Caco-2 (cell line): ENCODE measurements at regions of chr11 and their contacts with region 1.

Region 1: GRCh38 chr11:12963792-12964536 is 45.2 kb upstream of the RASSF10 start:
- DNase-seq: peak; percentile 70 to 85
- H3K4me3 ChIP-seq: no peak overlapping the region
- H3K4me3 Mint-ChIP-seq: no peak overlapping the region
- H3K27ac Mint-ChIP-seq: no peak overlapping the region
- H3K4me1 ChIP-seq: no peaks in the 10 kb centered on the region
- H3K4me1 Mint-ChIP-seq: no peaks in the 10 kb centered on the region
- H3K27me3 ChIP-seq: no peaks in the 10 kb centered on the region
- H3K27me3 Mint-ChIP-seq: peaks cover 5% of the 10 kb centered on the region
- CTCF ChIP-seq: peak; percentile 81 to 93

Region 2: GRCh38 chr11:13008625-13009475 is 44.9 kb after region 1 on chr11 and contains the start of gene RASSF10:
- CTCF ChIA-PET with region 1: interaction called, 6 read pairs
- POLR2A ChIA-PET with region 1: interaction called, 4 read pairs
- intact Hi-C with region 1: loop called (anchors 2 kb)
- DNase-seq: peak; percentile 74 to 79
- H3K4me3 ChIP-seq: peak within 1 kb of the TSS; percentile 52
- H3K4me3 Mint-ChIP-seq: peak within 1 kb of the TSS; percentile 74
- H3K27ac Mint-ChIP-seq: no peak within 1 kb of the TSS
- H3K4me1 ChIP-seq: peaks cover 31% of the 10 kb centered on the region
- H3K4me1 Mint-ChIP-seq: peaks cover 21% of the 10 kb centered on the region
- H3K27me3 ChIP-seq: 0 out of 2 replicates have a peak, but pooled peaks cover 1% of the 10 kb centered on the region
- H3K27me3 Mint-ChIP-seq: peaks cover 13% of the 10 kb centered on the region
- CTCF ChIP-seq: no peak
- total RNA-seq, gene RASSF10: 0.91 and 1.3 TPM in 2 replicates

Region 3: DNA sequence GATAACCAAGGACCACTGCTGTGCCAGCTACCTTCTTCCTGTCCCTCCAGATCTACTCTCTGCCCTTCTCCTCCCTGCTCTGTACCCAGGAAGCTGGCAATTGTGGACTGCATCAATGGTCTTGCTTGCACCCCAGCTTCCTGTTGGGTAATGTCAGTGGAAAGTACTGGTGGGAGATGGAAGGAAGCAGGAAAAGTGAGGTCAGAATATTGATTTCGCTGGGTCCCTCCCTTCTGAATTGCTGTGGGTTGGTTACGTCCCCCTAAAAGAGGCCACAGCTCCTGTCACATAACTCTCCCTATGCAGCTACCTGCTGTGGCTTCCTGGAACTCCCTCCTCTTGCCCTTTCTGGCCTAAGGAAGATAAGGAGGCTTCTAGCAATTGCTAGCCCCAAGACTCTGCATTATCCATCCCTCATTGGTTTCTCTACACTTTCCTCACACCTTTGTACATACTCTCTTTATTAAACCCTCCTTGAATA is 126.3 kb after region 1 on chr11:
- CTCF ChIA-PET with region 1: no interaction called
- POLR2A ChIA-PET with region 1: no interaction called
- intact Hi-C with region 1: no loop called
- DNase-seq: no peak
- H3K4me3 ChIP-seq: no peak overlapping the region
- H3K4me3 Mint-ChIP-seq: no peak overlapping the region
- H3K27ac Mint-ChIP-seq: no peak overlapping the region
- H3K4me1 ChIP-seq: peaks cover 5% of the 10 kb centered on the region; the same call in 1 of the 2 replicates
- H3K4me1 Mint-ChIP-seq: no peaks in the 10 kb centered on the region
- H3K27me3 ChIP-seq: no peaks in the 10 kb centered on the region
- H3K27me3 Mint-ChIP-seq: peaks cover 15% of the 10 kb centered on the region
- CTCF ChIP-seq: no peak

Region 4: GRCh38 chr11:13114566-13115379 is 150.8 kb after region 1 on chr11:
- CTCF ChIA-PET with region 1: interaction called, 7 read pairs
- POLR2A ChIA-PET with region 1: no interaction called
- intact Hi-C with region 1: loop called (anchors 1 kb)
- DNase-seq: peak; percentile 81 to 82
- H3K4me3 ChIP-seq: no peak overlapping the region
- H3K4me3 Mint-ChIP-seq: no peak overlapping the region
- H3K27ac Mint-ChIP-seq: peak overlapping the region; percentile 11
- H3K4me1 ChIP-seq: peaks cover 5% of the 10 kb centered on the region; the same call in 1 of the 2 replicates
- H3K4me1 Mint-ChIP-seq: peaks cover 10% of the 10 kb centered on the region
- H3K27me3 ChIP-seq: no peaks in the 10 kb centered on the region; the same call in 1 of the 2 replicates
- H3K27me3 Mint-ChIP-seq: no peaks in the 10 kb centered on the region
- CTCF ChIP-seq: peak in 1 of 2 experiments; percentile 66

Region 5: GRCh38 chr11:13152736-13153533 is 189.0 kb after region 1 on chr11:
- CTCF ChIA-PET with region 1: interaction called, 5 read pairs
- POLR2A ChIA-PET with region 1: no interaction called
- intact Hi-C with region 1: loop called (anchors 1 kb)
- DNase-seq: peak in 1 of 2 experiments; percentile 39
- H3K4me3 ChIP-seq: no peak overlapping the region
- H3K4me3 Mint-ChIP-seq: no peak overlapping the region
- H3K27ac Mint-ChIP-seq: no peak overlapping the region
- H3K4me1 ChIP-seq: peaks cover 9% of the 10 kb centered on the region; the same call in 1 of the 2 replicates
- H3K4me1 Mint-ChIP-seq: peaks cover 17% of the 10 kb centered on the region
- H3K27me3 ChIP-seq: no peaks in the 10 kb centered on the region
- H3K27me3 Mint-ChIP-seq: no peaks in the 10 kb centered on the region
- CTCF ChIP-seq: peak; percentile 26 to 38

Region 6: GRCh38 chr11:13183094-13183825 is 219.3 kb after region 1 on chr11:
- CTCF ChIA-PET with region 1: interaction called, 15 read pairs
- POLR2A ChIA-PET with region 1: no interaction called
- intact Hi-C with region 1: loop called (anchors 1 kb)
- DNase-seq: peak in 1 of 2 experiments; percentile 22
- H3K4me3 ChIP-seq: no peak overlapping the region
- H3K4me3 Mint-ChIP-seq: peak overlapping the region; percentile 10
- H3K27ac Mint-ChIP-seq: no peak overlapping the region
- H3K4me1 ChIP-seq: peaks cover 6% of the 10 kb centered on the region
- H3K4me1 Mint-ChIP-seq: no peaks in the 10 kb centered on the region
- H3K27me3 ChIP-seq: no peaks in the 10 kb centered on the region
- H3K27me3 Mint-ChIP-seq: peaks cover 2% of the 10 kb centered on the region
- CTCF ChIP-seq: peak; percentile 41 to 53

Region 7: GRCh38 chr11:13343931-13344717 is 380.2 kb after region 1 on chr11:
- CTCF ChIA-PET with region 1: interaction called, 3 read pairs
- POLR2A ChIA-PET with region 1: no interaction called
- intact Hi-C with region 1: loop called (anchors 10 kb)
- DNase-seq: peak; percentile 76 to 80
- H3K4me3 ChIP-seq: no peak overlapping the region
- H3K4me3 Mint-ChIP-seq: no peak overlapping the region
- H3K27ac Mint-ChIP-seq: no peak overlapping the region
- H3K4me1 ChIP-seq: no peaks in the 10 kb centered on the region
- H3K4me1 Mint-ChIP-seq: peaks cover 12% of the 10 kb centered on the region
- H3K27me3 ChIP-seq: no peaks in the 10 kb centered on the region
- H3K27me3 Mint-ChIP-seq: no peaks in the 10 kb centered on the region
- CTCF ChIP-seq: peak; percentile 81 to 82